ENCODE measurements at regions of chr20 and their contacts with region 1.

Region 1: DNA sequence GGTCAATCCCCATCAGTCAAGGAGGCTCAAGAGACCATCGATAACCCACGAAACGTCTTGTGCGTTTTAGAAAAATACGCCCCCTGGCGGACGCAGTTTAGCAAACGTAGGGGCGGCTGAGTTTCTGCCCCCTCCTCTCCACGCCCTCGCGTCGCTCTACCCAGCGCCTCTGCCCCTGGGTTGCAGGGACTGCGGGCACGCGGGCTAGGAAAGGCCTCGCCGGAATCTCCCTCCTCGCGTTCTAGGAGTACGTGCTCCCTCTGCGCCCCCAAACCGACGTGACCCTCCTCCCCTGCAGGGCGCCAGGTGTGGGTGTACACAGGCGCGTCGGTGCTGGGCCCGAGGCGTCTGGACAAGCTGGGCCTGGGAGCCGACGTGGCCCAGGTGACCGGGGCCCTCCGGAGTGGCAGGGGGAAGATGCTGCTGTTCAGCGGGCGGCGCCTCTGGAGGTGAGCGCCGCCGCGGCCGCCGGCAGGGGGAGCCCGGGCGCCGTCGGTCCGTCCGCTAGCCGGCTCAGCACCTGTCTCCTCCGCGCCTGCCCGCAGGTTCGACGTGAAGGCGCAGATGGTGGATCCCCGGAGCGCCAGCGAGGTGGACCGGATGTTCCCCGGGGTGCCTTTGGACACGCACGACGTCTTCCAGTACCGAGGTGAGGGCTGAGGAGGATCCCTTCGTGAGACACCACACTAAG is 5.3 kb downstream of the MMP9 start:
- DNase-seq: peak; percentile 46 to 88 (median 60)
- ATAC-seq: peak; percentile 57
- H3K4me3 ChIP-seq: peak overlapping the region; percentile 43
- H3K4me3 Mint-ChIP-seq: peak overlapping the region; percentile 35
- H3K27ac ChIP-seq: no peak overlapping the region
- H3K27ac Mint-ChIP-seq: no peak overlapping the region
- H3K4me1 ChIP-seq: peaks cover 55% of the 10 kb centered on the region
- H3K4me1 Mint-ChIP-seq: peaks cover 62% of the 10 kb centered on the region
- H3K27me3 ChIP-seq: peaks cover 41 to 48% of the 10 kb centered on the region in 2 experiments
- H3K27me3 Mint-ChIP-seq: peaks cover 86% of the 10 kb centered on the region
- CTCF ChIP-seq: peak; percentile 96

Region 2: GRCh38 chr20:45998761-45999160 is 15.2 kb before region 1 on chr20:
- CTCF ChIA-PET with region 1: interaction called, 14 read pairs
- POLR2A ChIA-PET with region 1: no interaction called
- intact Hi-C with region 1: loop called in 1 of 2 experiments (anchors 1 kb)
- DNase-seq: peak in 3 of 14 experiments; percentile 49 to 77 (median 73)
- ATAC-seq: peak; percentile 84
- H3K4me3 ChIP-seq: no peak overlapping the region
- H3K4me3 Mint-ChIP-seq: peak overlapping the region; percentile 43
- H3K27ac ChIP-seq: no peak overlapping the region
- H3K27ac Mint-ChIP-seq: peak overlapping the region; percentile 8
- H3K4me1 ChIP-seq: peaks cover 70% of the 10 kb centered on the region
- H3K4me1 Mint-ChIP-seq: peaks cover 71% of the 10 kb centered on the region
- H3K27me3 ChIP-seq: no peaks in the 10 kb centered on the region
- H3K27me3 Mint-ChIP-seq: no peaks in the 10 kb centered on the region
- CTCF ChIP-seq: no peak

Region 3: GRCh38 chr20:46174469-46175128 is 160.6 kb after region 1 on chr20:
- CTCF ChIA-PET with region 1: no interaction called
- POLR2A ChIA-PET with region 1: interaction called, 3 read pairs
- intact Hi-C with region 1: loop called (anchors 2 kb)
- DNase-seq: peak; percentile 50 to 83 (median 64)
- ATAC-seq: peak; percentile 90
- H3K4me3 ChIP-seq: no peak overlapping the region
- H3K4me3 Mint-ChIP-seq: no peak overlapping the region
- H3K27ac ChIP-seq: no peak overlapping the region
- H3K27ac Mint-ChIP-seq: no peak overlapping the region
- H3K4me1 ChIP-seq: peaks cover 3% of the 10 kb centered on the region
- H3K4me1 Mint-ChIP-seq: no peaks in the 10 kb centered on the region
- H3K27me3 ChIP-seq: peaks cover 25 to 49% of the 10 kb centered on the region in 2 experiments
- H3K27me3 Mint-ChIP-seq: peaks cover 90% of the 10 kb centered on the region
- CTCF ChIP-seq: peak; percentile 39

Measured in CD4-positive, alpha-beta T cell (primary cell).